PC-9 (cell line): ENCODE measurements at regions of chr19 and their contacts with region 1.

Region 1: DNA sequence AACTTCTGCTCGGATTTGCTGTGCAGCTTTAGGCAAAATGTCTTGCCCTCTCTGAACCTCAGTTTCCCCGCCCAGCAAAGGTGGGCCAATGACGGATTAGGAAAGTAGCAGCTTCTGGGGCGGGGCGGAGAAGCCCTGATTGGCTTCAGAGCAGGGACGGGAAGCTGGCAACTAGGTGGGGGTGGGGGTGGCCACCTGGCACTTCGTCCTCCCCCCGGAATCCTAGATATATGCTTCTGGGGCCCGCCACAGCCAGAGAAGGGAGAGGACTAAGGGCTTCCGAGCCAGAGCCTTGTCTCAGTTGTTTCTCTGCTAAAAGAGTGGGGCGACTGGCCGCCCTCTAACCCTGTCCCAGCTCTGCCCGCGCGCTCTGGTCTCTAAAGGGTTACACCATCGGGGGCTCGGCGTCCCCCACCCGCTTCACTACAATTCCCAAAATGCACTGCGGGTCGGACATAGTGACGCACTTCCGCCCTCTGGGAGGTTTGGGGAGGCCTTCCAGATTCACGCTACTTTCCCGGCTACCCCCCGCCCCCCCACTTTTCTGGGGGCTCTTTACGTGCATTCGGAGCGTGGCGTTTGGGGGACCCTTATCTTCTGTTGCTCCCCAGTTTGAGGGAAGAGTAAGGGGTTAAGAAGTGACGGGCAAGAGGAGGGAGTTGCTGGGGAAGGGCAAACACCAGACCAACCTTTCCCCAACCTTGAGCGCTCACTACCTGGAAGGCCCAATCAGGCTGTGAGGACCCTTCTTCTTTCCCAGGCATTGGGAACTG is 672 bp upstream of the IRF2BP1 start:
- DNase-seq: peak; percentile 85 to 89
- H3K4me3 ChIP-seq: peak overlapping the region; percentile 75
- H3K27ac ChIP-seq: peak overlapping the region; percentile 62
- H3K4me1 ChIP-seq: peaks cover 18% of the 10 kb centered on the region
- H3K27me3 ChIP-seq: no peaks in the 10 kb centered on the region
- CTCF ChIP-seq: 0 out of 2 replicates have a peak, but pooled peaks have one; percentile 2

Region 2: GRCh38 chr19:45730389-45731288 is 156.0 kb before region 1 on chr19 and contains the start of gene FBXO46:
- CTCF ChIA-PET with region 1: interaction called, 12 read pairs
- POLR2A ChIA-PET with region 1: no interaction called
- intact Hi-C with region 1: no loop called
- DNase-seq: peak; percentile 94 to 97
- H3K4me3 ChIP-seq: peak within 1 kb of the TSS; percentile 93
- H3K27ac ChIP-seq: peak within 1 kb of the TSS; percentile 46
- H3K4me1 ChIP-seq: peaks cover 9% of the 10 kb centered on the region
- H3K27me3 ChIP-seq: no peaks in the 10 kb centered on the region
- CTCF ChIP-seq: no peak; the same call in 1 of the 2 replicates
- total RNA-seq, gene FBXO46: 33.3 and 45.5 TPM in 2 replicates

Region 3: GRCh38 chr19:45817010-45817724 is 69.4 kb before region 1 on chr19:
- CTCF ChIA-PET with region 1: no interaction called
- POLR2A ChIA-PET with region 1: interaction called, 7 read pairs
- intact Hi-C with region 1: loop called (anchors 1 kb)
- DNase-seq: peak; percentile 86 to 95
- H3K4me3 ChIP-seq: no peak overlapping the region
- H3K27ac ChIP-seq: no peak overlapping the region
- H3K4me1 ChIP-seq: no peaks in the 10 kb centered on the region
- H3K27me3 ChIP-seq: no peaks in the 10 kb centered on the region
- CTCF ChIP-seq: peak; percentile 99

Region 4: DNA sequence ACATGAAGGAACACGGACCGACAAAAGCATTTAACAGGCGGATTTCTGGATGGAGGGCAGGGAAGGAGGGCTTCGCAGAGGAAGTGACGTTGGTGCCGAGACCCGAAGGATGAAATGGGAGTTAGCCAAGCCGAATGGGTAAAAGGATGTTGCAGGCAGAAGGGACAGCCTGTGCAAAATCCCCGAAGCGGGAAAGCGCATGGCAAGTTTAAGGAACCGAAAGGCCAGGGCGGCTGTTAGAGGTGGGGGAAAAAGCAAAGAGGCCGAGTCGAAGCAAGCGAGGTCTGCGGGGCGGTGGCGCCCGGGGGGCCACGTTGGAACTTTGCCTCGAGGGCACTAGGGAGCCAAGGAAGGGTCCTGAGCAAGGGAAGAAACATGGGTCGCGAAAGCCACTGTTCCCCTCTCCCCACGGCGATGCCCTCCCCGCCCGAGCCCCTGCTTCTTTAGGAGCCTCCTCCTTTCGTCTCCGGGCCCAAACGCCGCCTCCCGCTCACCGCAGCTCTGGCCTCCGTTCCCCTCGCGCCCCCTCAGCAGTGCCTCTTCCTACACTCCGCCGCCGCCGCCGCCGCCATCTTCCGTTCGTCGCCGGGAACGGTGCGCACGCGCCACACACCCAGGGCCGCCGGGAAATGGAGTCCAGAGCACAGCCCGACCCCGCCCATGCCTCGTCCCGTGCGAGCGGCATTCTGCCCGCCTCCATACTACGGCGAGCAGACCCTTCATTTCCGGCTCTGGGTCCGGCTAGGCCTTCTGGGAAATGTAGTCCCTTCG is 23.9 kb before region 1 on chr19 and contains the start of gene SYMPK:
- CTCF ChIA-PET with region 1: interaction called, 6 read pairs
- POLR2A ChIA-PET with region 1: no interaction called
- intact Hi-C with region 1: loop called (anchors 1 kb)
- DNase-seq: peak; percentile 97
- H3K4me3 ChIP-seq: peak within 1 kb of the TSS; percentile 67
- H3K27ac ChIP-seq: peak within 1 kb of the TSS; percentile 30
- H3K4me1 ChIP-seq: peaks cover 15% of the 10 kb centered on the region
- H3K27me3 ChIP-seq: peaks cover 41% of the 10 kb centered on the region
- CTCF ChIP-seq: no peak; the same call in 1 of the 2 replicates
- total RNA-seq, gene SYMPK: 85.5 and 121 TPM in 2 replicates

Region 5: DNA sequence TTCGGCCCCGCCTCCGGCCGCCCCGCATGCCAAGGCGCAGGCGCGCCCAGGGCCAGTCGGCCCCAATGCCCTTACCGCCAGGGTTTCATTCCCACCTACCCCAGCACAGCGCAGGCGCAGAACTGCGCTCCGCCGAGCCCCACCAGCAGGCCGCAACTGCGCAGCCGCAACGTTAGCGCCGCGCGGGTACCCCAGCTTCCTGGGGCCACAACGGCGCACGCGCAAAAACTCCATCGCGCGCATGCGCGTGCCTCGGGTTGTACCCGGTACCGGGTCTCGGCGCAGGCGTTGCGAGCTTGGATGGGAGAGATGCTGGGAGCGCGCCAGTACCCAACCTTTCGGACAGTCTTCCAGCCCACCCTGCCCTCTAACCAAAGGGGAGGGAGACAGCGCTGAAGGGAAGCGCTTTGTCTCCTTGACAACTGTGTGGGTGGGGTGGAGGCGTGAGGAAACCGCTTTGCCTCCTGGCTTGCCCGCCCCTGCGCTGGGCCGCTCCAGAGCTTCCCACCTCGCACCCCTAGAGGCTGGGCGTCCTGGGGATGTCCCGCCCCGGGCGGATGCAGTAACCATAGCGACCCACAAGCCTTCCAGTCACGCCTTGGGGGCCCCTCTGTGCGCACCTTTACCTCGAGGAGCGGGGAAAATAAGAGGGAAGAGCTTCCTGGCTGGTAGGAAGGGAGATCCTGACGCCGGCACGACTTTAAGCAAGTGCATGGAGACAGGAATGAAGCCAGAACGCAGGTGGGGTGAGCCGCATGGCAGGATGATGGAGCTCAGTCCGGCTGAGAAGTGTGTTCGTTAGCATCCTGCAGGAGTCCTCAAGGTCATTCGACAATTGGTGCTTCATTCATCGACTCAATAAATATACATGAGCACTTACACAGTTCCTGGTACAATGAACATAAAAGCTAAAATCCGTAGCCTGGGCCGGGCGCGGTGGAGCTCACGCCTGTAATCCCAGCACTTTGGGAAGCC is 16.3 kb after region 1 on chr19:
- CTCF ChIA-PET with region 1: no interaction called
- POLR2A ChIA-PET with region 1: interaction called, 12 read pairs
- intact Hi-C with region 1: no loop called
- DNase-seq: peak; percentile 94 to 99
- H3K4me3 ChIP-seq: peak overlapping the region; percentile 95
- H3K27ac ChIP-seq: peak overlapping the region; percentile 7
- H3K4me1 ChIP-seq: peaks cover 32% of the 10 kb centered on the region
- H3K27me3 ChIP-seq: no peaks in the 10 kb centered on the region
- CTCF ChIP-seq: no peak

Region 6: DNA sequence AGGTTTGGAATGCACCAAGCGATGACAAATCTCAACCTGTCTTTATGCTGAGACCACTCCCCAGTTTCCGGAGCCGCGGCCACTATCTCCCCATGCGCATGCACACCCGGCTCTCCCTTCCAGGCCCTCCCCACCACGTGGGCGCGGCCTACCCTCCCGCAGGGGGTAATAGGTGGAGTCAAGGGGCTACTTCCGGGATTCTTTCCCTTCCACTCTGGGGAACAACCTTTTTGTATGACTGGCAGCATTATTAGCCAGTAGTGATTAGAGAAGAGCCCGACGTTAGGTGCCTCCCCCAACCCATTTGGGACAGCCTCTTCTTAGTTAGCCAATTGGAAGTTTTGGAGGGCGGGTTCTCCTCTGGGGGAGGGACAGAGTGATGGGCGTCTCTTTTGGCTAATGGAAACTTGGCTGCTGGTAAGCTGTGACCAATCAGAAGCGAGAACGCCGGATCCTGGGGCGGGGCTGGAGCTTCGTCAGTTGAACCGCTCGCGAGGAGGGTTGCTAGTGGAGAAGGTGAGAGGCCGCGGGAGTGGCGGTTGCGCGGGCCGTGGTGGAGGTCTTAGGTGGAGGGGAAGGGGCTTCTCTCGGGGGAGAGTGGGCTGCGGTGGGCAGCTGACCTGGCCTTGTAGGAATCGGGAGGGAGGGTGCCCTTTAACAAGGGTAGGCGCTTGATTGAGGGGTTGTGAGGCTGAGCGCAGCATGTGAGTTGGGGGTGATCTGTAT is 108.5 kb after region 1 on chr19 and contains the start of gene CCDC61:
- CTCF ChIA-PET with region 1: interaction called, 3 read pairs
- POLR2A ChIA-PET with region 1: no interaction called
- intact Hi-C with region 1: loop called (anchors 1 kb)
- DNase-seq: peak; percentile 96 to 99
- H3K4me3 ChIP-seq: peak within 1 kb of the TSS; percentile 77
- H3K27ac ChIP-seq: peak within 1 kb of the TSS; percentile 37
- H3K4me1 ChIP-seq: peaks cover 11% of the 10 kb centered on the region
- H3K27me3 ChIP-seq: no peaks in the 10 kb centered on the region
- CTCF ChIP-seq: no peak
- total RNA-seq, gene CCDC61: 22.8 and 24.8 TPM in 2 replicates

Region 7: DNA sequence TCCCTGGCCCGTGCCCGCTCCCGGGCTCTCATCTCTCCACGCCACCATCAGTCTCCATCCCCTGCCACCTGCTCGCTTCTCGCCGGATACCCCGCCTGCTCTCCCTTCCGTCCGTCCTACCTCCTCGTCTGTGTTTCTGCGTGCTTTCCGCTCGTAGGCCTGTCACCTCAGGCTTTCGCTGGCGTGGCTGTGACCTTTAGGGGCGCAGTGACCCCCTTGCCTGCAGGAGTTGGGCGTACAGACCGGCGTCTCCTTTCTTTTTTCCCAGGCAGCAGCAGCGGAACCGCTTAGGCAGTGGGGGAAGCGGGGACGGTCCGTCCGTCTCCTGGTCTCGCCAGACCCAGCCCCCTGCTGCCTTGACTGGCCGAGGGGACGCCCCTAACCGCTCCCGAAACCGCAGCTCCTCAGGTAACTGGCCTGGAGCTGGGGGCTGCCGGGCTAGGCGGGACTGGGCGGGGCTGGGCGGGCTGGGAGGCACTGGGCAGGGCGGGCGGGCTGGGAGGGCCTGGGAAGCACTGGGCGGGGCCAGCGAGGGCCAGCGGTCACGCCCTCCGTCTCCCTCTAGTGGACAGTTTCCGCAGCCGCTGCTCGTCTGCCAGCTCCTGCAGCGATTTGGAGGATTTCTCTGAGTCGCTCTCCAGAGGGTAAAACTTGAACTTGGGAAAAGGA is 129.9 kb after region 1 on chr19:
- CTCF ChIA-PET with region 1: interaction called, 6 read pairs
- POLR2A ChIA-PET with region 1: no interaction called
- intact Hi-C with region 1: loop called (anchors 5 kb)
- DNase-seq: peak; percentile 61 to 82
- H3K4me3 ChIP-seq: peak overlapping the region; percentile 56; the same call in 1 of the 2 replicates
- H3K27ac ChIP-seq: no peak overlapping the region
- H3K4me1 ChIP-seq: peaks cover 7% of the 10 kb centered on the region; the same call in 1 of the 2 replicates
- H3K27me3 ChIP-seq: no peaks in the 10 kb centered on the region
- CTCF ChIP-seq: peak; percentile 82